ENCODE measurements at regions of chr11 and their contacts with region 1.

Region 1: DNA sequence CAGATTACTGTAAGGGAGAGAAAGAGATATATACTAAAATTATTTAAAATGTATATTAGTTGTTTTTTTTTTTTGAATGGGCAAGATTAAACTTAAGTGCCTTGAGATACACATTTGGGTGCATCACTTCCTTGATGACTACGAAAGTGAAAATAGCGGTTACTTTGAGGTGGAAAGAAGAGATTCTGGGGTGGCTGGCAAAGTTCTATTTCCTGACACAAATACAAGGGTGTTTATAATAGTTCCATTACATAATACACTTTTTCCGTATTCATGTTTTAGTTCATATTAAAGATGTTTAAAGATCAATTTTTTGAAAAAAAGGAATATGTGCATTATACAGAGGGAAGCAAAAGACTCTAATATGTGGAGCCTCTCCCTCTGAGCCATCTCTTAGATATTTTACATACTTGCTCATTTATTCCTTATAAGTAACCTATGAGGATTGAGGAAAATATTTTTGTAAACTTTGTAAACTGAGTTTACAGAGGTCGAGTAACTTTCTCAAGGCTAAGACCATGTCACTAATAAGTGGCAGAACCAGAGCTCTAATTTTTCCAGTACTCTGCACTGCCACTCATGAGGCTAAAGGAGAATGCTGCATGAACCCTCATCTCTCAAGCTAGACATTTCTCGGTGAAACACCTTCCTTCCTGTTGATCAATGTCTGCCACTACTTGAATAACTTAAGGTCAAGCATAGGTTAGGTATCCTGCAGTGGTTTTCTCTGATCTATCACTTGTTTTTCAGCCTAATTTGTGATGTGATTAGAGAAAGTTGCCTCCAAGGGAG is 58.6 kb downstream of the DDIAS start:
- DNase-seq: peak; percentile 33
- H3K4me3 Mint-ChIP-seq: peak overlapping the region; percentile 4
- H3K27ac Mint-ChIP-seq: peak overlapping the region; percentile 67
- H3K4me1 Mint-ChIP-seq: peaks cover 65% of the 10 kb centered on the region
- H3K27me3 Mint-ChIP-seq: no peaks in the 10 kb centered on the region

Region 2: GRCh38 chr11:82927254-82927880 is 32.8 kb before region 1 on chr11:
- CTCF ChIA-PET with region 1: interaction called, 4 read pairs
- POLR2A ChIA-PET with region 1: no interaction called
- intact Hi-C with region 1: loop called (anchors 2 kb)
- DNase-seq: no peak
- H3K4me3 Mint-ChIP-seq: no peak overlapping the region
- H3K27ac Mint-ChIP-seq: no peak overlapping the region
- H3K4me1 Mint-ChIP-seq: peaks cover 14% of the 10 kb centered on the region
- H3K27me3 Mint-ChIP-seq: no peaks in the 10 kb centered on the region

Region 3: DNA sequence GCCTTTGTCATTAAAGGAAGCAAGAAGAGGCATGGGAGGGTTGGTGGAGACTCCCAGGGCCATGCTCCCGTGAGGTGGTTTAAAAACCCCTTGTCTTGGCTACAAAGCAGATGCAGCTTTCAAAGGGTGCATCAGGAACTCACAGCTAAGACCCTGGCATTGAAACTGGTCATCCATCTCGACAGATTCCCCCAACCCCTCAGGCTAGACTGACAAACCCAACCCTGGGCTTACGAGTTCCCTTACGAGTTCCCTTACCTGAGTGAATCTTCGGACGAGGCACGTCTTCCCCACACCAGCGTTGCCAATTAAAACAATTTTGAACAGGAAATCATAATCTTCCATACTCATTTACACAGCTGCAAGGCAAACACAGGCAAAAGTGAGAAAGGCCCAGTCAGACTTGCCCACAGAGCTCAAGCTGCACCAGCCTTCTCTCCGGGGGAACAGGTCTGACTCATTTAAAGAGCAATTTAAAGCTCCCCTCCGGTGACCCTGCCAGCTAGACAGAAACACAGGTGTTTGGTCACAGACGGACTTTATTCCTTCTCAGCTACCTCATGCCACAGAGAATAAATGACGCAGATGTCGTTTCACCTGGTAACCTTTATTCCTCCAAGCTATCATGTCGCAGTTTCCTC is 36.9 kb after region 1 on chr11:
- CTCF ChIA-PET with region 1: interaction called, 3 read pairs
- POLR2A ChIA-PET with region 1: no interaction called
- intact Hi-C with region 1: loop called (anchors 1 kb)
- DNase-seq: peak; percentile 67
- H3K4me3 Mint-ChIP-seq: no peak overlapping the region
- H3K27ac Mint-ChIP-seq: peak overlapping the region; percentile 43
- H3K4me1 Mint-ChIP-seq: peaks cover 60% of the 10 kb centered on the region
- H3K27me3 Mint-ChIP-seq: no peaks in the 10 kb centered on the region

Measured in activated CD4-positive, alpha-beta memory T cell treated with anti-CD3 and anti-CD28 coated beads for 36 hours (primary cell).